Heart left ventricle (tissue), 16 donors: ENCODE measurements at regions of chr4 and their contacts with region 1.

Region 1: GRCh38 chr4:185874516-185875230 is 62.7 kb upstream of the SORBS2 start:
- DNase-seq: no peak
- ATAC-seq: peak in 1 of 4 donors; percentile 45
- H3K4me3 ChIP-seq: no peak overlapping the region
- H3K27ac ChIP-seq: peak overlapping the region in 2 of 12 donors; percentile 0 to 64
- H3K4me1 ChIP-seq: peaks cover 0 to 24% (median 3%) of the 10 kb centered on the region in 12 donors
- H3K27me3 ChIP-seq: no peaks in the 10 kb centered on the region
- CTCF ChIP-seq: no peak
- POLR2A ChIP-seq: no peak

Region 2: GRCh38 chr4:185672618-185673017 is 202.1 kb before region 1 on chr4:
- intact Hi-C with region 1: loop called in 1 of 10 experiments (anchors 10 kb)
- DNase-seq: no peak
- ATAC-seq: peak in 2 of 4 donors; percentile 34 to 50
- H3K4me3 ChIP-seq: no peak overlapping the region
- H3K27ac ChIP-seq: peak overlapping the region in 11 of 12 donors; percentile 1 to 71 (median 33)
- H3K4me1 ChIP-seq: peaks cover 0 to 59% (median 24%) of the 10 kb centered on the region in 12 donors
- H3K27me3 ChIP-seq: no peaks in the 10 kb centered on the region
- CTCF ChIP-seq: no peak
- POLR2A ChIP-seq: no peak

Region 3: GRCh38 chr4:186172546-186172945 is 297.9 kb after region 1 on chr4:
- intact Hi-C with region 1: no loop called
- DNase-seq: no peak
- ATAC-seq: no peak
- H3K4me3 ChIP-seq: no peak overlapping the region
- H3K27ac ChIP-seq: no peak overlapping the region
- H3K4me1 ChIP-seq: no peaks in the 10 kb centered on the region
- H3K27me3 ChIP-seq: no peaks in the 10 kb centered on the region
- CTCF ChIP-seq: no peak
- POLR2A ChIP-seq: no peak

Region 4: DNA sequence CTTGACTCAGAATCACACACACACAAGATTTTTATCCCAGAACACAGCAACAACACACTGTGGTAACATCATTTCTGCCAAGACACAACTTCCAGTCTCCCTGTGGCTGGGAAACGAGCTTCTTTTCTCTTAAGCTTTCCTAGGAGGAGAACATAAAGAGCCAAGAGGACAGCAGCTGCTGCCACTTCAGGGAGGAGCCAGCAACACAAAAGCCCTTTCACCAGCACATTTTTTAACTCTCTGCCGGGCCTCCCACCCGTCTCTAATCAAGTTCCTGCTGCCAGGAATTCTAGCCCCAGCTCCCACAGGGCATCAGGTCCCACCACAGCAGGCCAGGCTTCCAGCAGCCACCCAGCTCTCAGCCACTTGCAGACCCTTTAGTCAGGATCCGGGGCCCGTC is 826.6 kb after region 1 on chr4:
- intact Hi-C with region 1: no loop called
- DNase-seq: peak in 3 of 5 donors; percentile 31 to 63 (median 63)
- ATAC-seq: peak in 3 of 4 donors; percentile 19 to 47 (median 46)
- H3K4me3 ChIP-seq: peak overlapping the region in 8 of 12 donors; percentile 1 to 45 (median 16)
- H3K27ac ChIP-seq: peak overlapping the region; percentile 60 to 91 (median 84)
- H3K4me1 ChIP-seq: peaks cover 6 to 75% (median 47%) of the 10 kb centered on the region in 12 donors
- H3K27me3 ChIP-seq: no peaks in the 10 kb centered on the region
- CTCF ChIP-seq: no peak
- POLR2A ChIP-seq: no peak